Lower leg skin (tissue), 4 donors: ENCODE measurements at regions of chr1 and their contacts with region 1.

Region 1: DNA sequence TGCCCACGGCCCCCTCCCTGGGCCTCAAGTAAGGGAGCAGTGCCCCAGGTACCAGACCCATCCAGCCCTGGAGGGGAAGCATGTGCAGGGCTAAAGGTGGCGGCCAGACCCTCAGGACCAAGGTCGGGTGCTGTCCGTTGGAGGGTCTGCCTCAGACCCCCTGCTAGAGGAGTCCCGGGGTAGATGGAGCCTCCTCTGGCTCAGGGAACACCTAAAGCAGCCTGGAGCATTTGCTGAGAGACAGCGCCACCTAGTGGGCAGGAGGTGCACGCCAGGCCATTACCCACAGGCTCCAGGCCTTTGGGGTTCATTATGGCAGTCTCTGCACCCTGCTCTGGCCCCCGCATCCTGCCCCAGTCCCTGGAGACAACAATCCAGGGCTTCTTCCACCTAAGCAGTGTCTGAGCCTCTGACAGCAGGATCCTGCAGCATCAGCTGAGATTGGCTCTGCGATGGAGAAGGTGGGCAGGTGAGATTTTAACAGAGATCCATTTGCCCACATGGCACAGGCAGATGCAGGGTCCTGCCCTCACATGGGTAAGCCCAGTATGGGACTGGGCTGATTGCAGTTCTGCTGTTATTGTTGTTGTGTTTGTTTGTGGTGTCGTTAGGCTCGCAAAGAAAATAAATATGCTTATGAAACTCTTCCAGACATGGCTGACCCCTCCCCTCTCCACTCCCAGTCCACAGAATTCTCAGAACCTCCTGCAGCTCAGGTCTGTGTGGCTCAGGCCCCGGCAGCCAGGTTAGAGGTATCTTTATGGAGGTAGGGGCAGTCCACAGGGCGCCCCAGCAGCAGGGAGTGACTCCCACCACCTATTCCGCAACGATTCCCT is 42.4 kb downstream of the CTNNBIP1 start:
- DNase-seq: peak; percentile 81 to 96
- H3K4me3 ChIP-seq: no peak overlapping the region
- CTCF ChIP-seq: peak in 2 of 3 donors; percentile 79 to 94
- POLR2A ChIP-seq: no peak

Region 2: GRCh38 chr1:9629445-9630201 is 238.0 kb before region 1 on chr1:
- intact Hi-C with region 1: loop called (anchors 10 kb)
- DNase-seq: peak; percentile 56 to 89
- H3K4me3 ChIP-seq: no peak overlapping the region
- CTCF ChIP-seq: no peak
- POLR2A ChIP-seq: no peak

Region 3: DNA sequence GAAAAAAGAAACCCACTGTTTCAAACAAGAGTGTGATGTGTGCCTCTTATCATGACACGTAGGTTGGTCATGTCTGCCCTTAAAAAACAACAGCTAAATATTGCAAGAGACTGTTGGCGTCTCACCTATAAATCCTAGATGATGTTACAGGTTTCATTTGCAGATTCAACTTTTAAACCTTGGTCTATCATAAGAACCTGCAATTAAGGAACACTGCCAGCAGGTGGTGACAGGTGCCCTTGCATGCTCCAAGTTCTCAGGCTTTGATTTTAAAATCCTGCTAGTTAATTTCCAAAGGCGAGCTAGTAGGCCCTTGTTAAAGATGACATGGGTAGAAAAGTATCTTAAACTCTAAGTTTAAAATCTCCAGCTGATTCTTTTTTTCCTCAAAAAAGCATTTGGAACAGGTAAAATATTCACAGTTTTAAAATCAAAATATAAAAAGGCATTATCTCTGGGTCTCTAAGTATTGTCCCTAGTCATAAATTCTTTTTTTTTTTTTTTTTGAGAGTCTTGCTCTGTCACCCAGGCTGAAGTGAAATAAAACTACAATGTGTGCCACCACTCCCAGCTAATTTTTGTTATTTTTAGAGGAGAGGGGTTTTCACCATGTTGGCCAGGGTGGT is 83.0 kb before region 1 on chr1:
- intact Hi-C with region 1: loop called (anchors 10 kb)
- DNase-seq: peak in 1 of 2 donors; percentile 45
- H3K4me3 ChIP-seq: no peak overlapping the region
- CTCF ChIP-seq: peak in 1 of 3 donors; percentile 9
- POLR2A ChIP-seq: no peak